Esophagus muscularis mucosa (tissue), 4 donors: ENCODE measurements at regions of chr2 and their contacts with region 1.

Region 1: DNA sequence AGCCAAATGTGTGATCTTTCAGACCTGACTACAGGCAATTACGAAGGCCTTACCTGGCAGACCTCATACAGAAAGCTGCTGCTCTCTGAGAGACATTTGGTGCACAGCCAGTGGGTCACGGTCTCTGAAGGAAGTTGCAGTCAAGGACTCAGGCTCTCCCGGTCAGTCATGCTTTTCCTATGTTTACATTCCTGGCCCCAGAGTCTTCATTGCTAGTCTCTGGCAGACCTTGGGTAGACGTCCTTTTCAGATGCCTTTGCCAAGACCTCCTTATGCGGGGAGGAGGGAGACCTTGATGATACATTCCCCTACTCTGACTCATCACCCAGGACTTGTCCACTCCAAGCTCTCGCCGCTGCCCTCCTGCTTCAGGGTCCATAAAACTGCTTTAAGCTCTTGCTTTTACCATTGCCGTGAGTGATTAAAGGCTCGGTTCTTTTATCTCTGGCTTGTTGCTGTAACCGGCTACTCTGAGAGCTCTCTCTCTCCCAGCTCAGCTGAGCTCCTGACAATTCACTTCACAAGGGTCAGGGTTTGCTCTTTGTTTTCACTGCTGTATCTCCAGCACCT is 62.0 kb upstream of the SLC35F5 start:
- DNase-seq: no peak
- H3K4me3 ChIP-seq: peak overlapping the region in 3 of 4 donors; percentile 1 to 29 (median 27)
- H3K27ac ChIP-seq: peak overlapping the region; percentile 68 to 77 (median 70)
- H3K4me1 ChIP-seq: peaks cover 12 to 20% (median 17%) of the 10 kb centered on the region in 4 donors
- H3K27me3 ChIP-seq: no peaks in the 10 kb centered on the region
- CTCF ChIP-seq: no peak
- EP300 ChIP-seq: no peak
- POLR2A ChIP-seq: no peak

Region 2: GRCh38 chr2:113762377-113763118 is 55.9 kb before region 1 on chr2:
- intact Hi-C with region 1: loop called (anchors 5 kb)
- DNase-seq: no peak
- H3K4me3 ChIP-seq: no peak overlapping the region
- H3K27ac ChIP-seq: no peak overlapping the region
- H3K4me1 ChIP-seq: peaks cover 1 to 7% (median 6%) of the 10 kb centered on the region in 4 donors
- H3K27me3 ChIP-seq: no peaks in the 10 kb centered on the region
- CTCF ChIP-seq: no peak
- EP300 ChIP-seq: no peak
- POLR2A ChIP-seq: no peak

Region 3: GRCh38 chr2:113889471-113890252 is 71.2 kb after region 1 on chr2 and contains the start of gene ACTR3:
- intact Hi-C with region 1: loop called (anchors 5 kb)
- DNase-seq: peak; percentile 99
- H3K4me3 ChIP-seq: peak within 1 kb of the TSS; percentile 76 to 98 (median 90)
- H3K27ac ChIP-seq: peak within 1 kb of the TSS; percentile 96 to 99 (median 99)
- H3K4me1 ChIP-seq: peaks cover 50 to 66% (median 61%) of the 10 kb centered on the region in 4 donors
- H3K27me3 ChIP-seq: no peaks in the 10 kb centered on the region
- CTCF ChIP-seq: peak in 2 of 3 experiments; percentile 9
- EP300 ChIP-seq: no peak
- POLR2A ChIP-seq: peak; percentile 58
- total RNA-seq, gene ACTR3: 163 to 198 (median 188) TPM

Region 4: GRCh38 chr2:114113518-114113917 is 295.1 kb after region 1 on chr2:
- intact Hi-C with region 1: no loop called
- DNase-seq: no peak
- H3K4me3 ChIP-seq: no peak overlapping the region
- H3K27ac ChIP-seq: no peak overlapping the region
- H3K4me1 ChIP-seq: no peaks in the 10 kb centered on the region
- H3K27me3 ChIP-seq: no peaks in the 10 kb centered on the region
- CTCF ChIP-seq: no peak
- EP300 ChIP-seq: no peak
- POLR2A ChIP-seq: no peak